WTC11 (cell line): ENCODE measurements at regions of chr5 and their contacts with region 1.

Region 1: DNA sequence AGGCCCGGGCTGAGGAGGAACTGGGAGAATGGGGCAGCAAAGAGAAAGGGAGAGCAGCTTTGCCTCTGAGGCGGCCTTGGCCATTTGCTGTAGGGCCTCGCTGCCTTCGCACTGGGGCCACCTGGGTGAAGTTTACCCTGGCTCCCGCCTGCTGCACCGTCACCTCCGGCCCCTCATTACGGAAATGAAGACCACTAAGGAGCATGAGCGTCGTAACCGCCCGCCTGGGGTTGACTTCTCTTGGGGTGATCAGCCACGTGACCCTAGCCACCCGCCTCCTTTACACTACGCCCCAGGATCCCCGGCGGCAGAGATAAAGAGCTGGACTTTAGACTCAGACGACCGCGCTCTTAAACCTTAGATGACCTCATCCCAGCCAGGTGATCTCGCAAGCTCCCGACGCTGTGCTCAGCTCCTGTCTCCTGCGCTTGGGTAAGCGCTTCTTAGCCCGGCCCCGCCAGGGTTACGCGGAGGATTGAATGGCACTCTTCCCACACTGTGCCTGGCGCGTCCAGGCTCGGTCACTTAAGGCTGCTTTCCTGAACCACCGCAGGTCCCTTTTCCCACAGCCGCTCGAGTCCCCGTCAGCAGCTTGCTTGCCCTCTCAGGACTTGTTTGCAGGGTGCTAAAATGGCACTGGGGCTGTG is 107.9 kb upstream of the LARP1 start:
- DNase-seq: peak; percentile 45
- ATAC-seq: peak; percentile 87
- H3K4me3 Mint-ChIP-seq: peak overlapping the region; percentile 65
- H3K27ac Mint-ChIP-seq: no peak overlapping the region
- H3K4me1 Mint-ChIP-seq: peaks cover 17% of the 10 kb centered on the region
- H3K27me3 Mint-ChIP-seq: peaks cover 26% of the 10 kb centered on the region
- CTCF ChIP-seq: no peak

Region 2: GRCh38 chr5:154683101-154683880 is 36.1 kb after region 1 on chr5:
- CTCF ChIA-PET with region 1: interaction called, 11 read pairs
- POLR2A ChIA-PET with region 1: no interaction called
- DNase-seq: no peak
- ATAC-seq: peak; percentile 5
- H3K4me3 Mint-ChIP-seq: peak overlapping the region; percentile 70
- H3K27ac Mint-ChIP-seq: peak overlapping the region; percentile 84
- H3K4me1 Mint-ChIP-seq: peaks cover 23% of the 10 kb centered on the region
- H3K27me3 Mint-ChIP-seq: no peaks in the 10 kb centered on the region
- CTCF ChIP-seq: no peak

Region 3: GRCh38 chr5:154714266-154714986 is 67.2 kb after region 1 on chr5:
- CTCF ChIA-PET with region 1: interaction called, 13 read pairs
- POLR2A ChIA-PET with region 1: no interaction called
- DNase-seq: no peak
- ATAC-seq: no peak
- H3K4me3 Mint-ChIP-seq: peak overlapping the region; percentile 65
- H3K27ac Mint-ChIP-seq: peak overlapping the region; percentile 77
- H3K4me1 Mint-ChIP-seq: peaks cover 60% of the 10 kb centered on the region
- H3K27me3 Mint-ChIP-seq: no peaks in the 10 kb centered on the region
- CTCF ChIP-seq: no peak

Region 4: GRCh38 chr5:154756811-154757675 is 109.8 kb after region 1 on chr5:
- CTCF ChIA-PET with region 1: interaction called, 11 read pairs
- POLR2A ChIA-PET with region 1: no interaction called
- DNase-seq: peak; percentile 41
- ATAC-seq: no peak
- H3K4me3 Mint-ChIP-seq: peak overlapping the region; percentile 93
- H3K27ac Mint-ChIP-seq: peak overlapping the region; percentile 91
- H3K4me1 Mint-ChIP-seq: peaks cover 61% of the 10 kb centered on the region
- H3K27me3 Mint-ChIP-seq: no peaks in the 10 kb centered on the region
- CTCF ChIP-seq: no peak

Region 5: DNA sequence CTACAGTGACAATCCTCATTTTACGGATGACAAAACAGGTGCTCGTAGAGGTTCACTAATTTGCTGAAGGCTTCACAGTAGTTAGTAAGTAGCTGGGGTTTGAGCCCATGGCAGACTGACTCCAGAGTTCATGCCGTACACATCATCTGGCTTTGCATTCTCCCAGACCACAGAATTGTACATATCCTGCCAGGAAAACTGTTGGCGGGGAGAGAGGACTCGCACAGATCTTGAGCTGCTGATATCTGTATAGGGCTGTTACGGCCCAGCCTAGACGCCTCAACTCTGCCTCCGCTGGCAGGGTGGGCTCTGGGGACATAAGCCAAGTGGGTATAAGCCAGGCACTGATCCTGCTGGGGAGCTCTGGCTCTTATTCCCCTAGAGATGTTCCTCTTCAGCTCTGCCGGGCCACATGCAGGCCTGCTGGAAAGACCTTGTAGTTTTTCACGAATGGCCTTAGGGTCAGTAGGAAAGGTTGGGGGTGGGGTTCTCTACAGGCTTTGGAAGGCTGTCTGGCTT is 124.2 kb after region 1 on chr5:
- CTCF ChIA-PET with region 1: interaction called, 10 read pairs
- POLR2A ChIA-PET with region 1: no interaction called
- DNase-seq: peak; percentile 36
- ATAC-seq: peak; percentile 67
- H3K4me3 Mint-ChIP-seq: peak overlapping the region; percentile 39
- H3K27ac Mint-ChIP-seq: peak overlapping the region; percentile 94
- H3K4me1 Mint-ChIP-seq: peaks cover 90% of the 10 kb centered on the region
- H3K27me3 Mint-ChIP-seq: no peaks in the 10 kb centered on the region
- CTCF ChIP-seq: no peak

Region 6: DNA sequence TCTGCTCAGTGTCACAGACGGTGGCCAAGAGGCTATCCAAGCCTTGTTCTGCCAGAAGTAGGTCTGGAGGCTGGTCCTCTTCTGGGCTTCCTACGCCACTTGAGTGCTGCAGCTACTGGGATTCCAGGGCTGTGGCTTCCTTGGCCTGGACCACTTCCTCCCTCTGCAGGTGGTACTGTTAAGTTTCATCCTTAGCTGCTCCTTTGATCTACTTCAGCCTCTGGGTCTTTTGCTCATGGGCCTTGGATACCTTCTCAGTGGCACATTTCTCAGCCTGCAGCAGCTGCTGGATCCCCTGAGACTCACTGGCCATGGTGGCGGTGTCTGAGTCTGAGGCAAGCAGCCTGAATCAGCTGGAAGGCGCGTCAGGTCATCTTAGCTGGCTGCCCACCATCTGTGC is 221.5 kb after region 1 on chr5:
- CTCF ChIA-PET with region 1: interaction called, 11 read pairs
- POLR2A ChIA-PET with region 1: no interaction called
- DNase-seq: peak; percentile 42
- ATAC-seq: peak; percentile 88
- H3K4me3 Mint-ChIP-seq: no peak overlapping the region
- H3K27ac Mint-ChIP-seq: peak overlapping the region; percentile 93
- H3K4me1 Mint-ChIP-seq: no peaks in the 10 kb centered on the region; the same call in 1 of the 2 replicates
- H3K27me3 Mint-ChIP-seq: no peaks in the 10 kb centered on the region
- CTCF ChIP-seq: no peak

Region 7: DNA sequence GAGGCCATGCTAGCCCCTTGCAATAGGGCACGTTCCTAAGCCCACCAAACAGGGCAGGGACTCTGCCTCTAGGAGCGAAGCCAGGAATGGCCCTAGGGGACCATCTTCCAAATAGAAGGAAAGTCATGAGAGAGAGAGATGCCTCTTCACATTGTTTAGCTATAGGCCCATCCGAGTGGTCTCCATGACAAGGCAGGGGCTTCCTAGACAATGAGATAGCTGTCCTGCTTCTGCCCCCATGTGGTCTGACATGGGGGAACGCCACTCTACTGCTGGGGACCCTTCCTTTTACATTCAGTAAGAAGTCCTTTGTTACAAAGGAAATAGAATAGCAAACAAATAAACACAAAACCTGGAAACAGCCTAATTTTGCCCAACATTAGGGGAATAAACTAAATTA is 348.4 kb after region 1 on chr5:
- CTCF ChIA-PET with region 1: no interaction called
- POLR2A ChIA-PET with region 1: no interaction called
- DNase-seq: peak; percentile 46
- ATAC-seq: peak; percentile 100
- H3K4me3 Mint-ChIP-seq: no peak overlapping the region
- H3K27ac Mint-ChIP-seq: no peak overlapping the region
- H3K4me1 Mint-ChIP-seq: no peaks in the 10 kb centered on the region
- H3K27me3 Mint-ChIP-seq: no peaks in the 10 kb centered on the region
- CTCF ChIP-seq: no peak